PC-9 (cell line): ENCODE measurements at regions of chr4 and their contacts with region 1.

Region 1: GRCh38 chr4:119785963-119786362 is 157.4 kb upstream of the PDE5A start:
- DNase-seq: peak; percentile 25 to 38
- H3K4me3 ChIP-seq: no peak overlapping the region
- H3K27ac ChIP-seq: no peak overlapping the region
- H3K4me1 ChIP-seq: no peaks in the 10 kb centered on the region
- H3K27me3 ChIP-seq: no peaks in the 10 kb centered on the region
- CTCF ChIP-seq: peak; percentile 71

Region 2: GRCh38 chr4:119559044-119559647 is 226.8 kb before region 1 on chr4:
- CTCF ChIA-PET with region 1: no interaction called
- POLR2A ChIA-PET with region 1: no interaction called
- intact Hi-C with region 1: loop called (anchors 2 kb)
- DNase-seq: no peak
- H3K4me3 ChIP-seq: no peak overlapping the region
- H3K27ac ChIP-seq: no peak overlapping the region
- H3K4me1 ChIP-seq: no peaks in the 10 kb centered on the region
- H3K27me3 ChIP-seq: no peaks in the 10 kb centered on the region
- CTCF ChIP-seq: peak; percentile 73

Region 3: DNA sequence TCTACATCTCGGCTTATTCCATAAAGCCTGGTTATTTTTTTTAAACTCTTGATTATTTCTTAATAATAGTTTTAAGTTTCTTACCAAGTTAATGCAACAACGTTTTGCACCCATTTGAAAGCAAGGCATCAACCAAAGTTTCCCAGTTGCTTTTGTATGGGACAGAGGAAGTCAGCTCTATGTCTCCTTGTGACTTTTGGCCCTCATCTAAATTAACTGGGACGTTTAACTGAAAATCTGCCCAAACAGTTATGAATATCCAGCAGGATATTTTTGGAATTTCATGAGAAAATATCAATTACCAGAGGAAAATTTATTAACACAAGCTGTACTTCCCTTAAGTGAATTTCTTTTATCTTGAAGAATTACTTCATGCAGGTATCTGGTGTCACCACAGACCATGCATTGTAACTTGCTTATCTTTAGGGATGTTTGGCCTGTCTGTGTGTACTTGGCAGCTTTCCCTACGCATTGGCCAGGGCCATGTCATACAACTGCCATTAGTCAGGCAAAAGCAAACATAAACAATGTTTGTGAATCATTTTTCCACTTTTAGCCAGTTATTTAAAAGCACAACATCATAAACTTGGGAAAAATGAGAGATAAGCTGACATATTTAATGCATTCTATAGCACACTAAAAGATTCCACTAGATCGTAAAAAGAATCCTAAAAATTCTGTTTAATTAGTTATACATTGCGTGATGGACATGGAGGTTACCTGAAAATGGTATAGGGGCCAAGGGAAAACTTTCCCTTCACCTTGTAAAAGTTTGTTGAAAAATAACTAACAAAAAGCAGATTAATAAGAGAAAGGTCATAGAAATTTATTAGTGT is 55.9 kb before region 1 on chr4:
- CTCF ChIA-PET with region 1: interaction called, 3 read pairs
- POLR2A ChIA-PET with region 1: no interaction called
- intact Hi-C with region 1: loop called (anchors 2 kb)
- DNase-seq: peak; percentile 70 to 91
- H3K4me3 ChIP-seq: peak overlapping the region; percentile 41; the same call in 1 of the 2 replicates
- H3K27ac ChIP-seq: peak overlapping the region; percentile 99
- H3K4me1 ChIP-seq: peaks cover 49% of the 10 kb centered on the region
- H3K27me3 ChIP-seq: no peaks in the 10 kb centered on the region
- CTCF ChIP-seq: no peak